Naive thymus-derived CD4-positive, alpha-beta T cell (primary cell): ENCODE measurements at regions of chr20 and their contacts with region 1.

Region 1: GRCh38 chr20:58407966-58408557 is 19.0 kb downstream of the VAPB start:
- DNase-seq: peak in 7 of 9 donors; percentile 19 to 47 (median 37)
- ATAC-seq: peak; percentile 77
- H3K4me3 ChIP-seq: peak overlapping the region; percentile 25
- H3K4me3 Mint-ChIP-seq: peak overlapping the region; percentile 62 to 84 (median 73)
- H3K27ac ChIP-seq: peak overlapping the region; percentile 60
- H3K27ac Mint-ChIP-seq: peak overlapping the region in 8 of 9 donors; percentile 79 to 93 (median 89)
- H3K4me1 ChIP-seq: peaks cover 21 to 35% of the 10 kb centered on the region in 2 donors
- H3K4me1 Mint-ChIP-seq: peaks cover 13 to 44% (median 39%) of the 10 kb centered on the region in 7 donors
- H3K27me3 ChIP-seq: no peaks in the 10 kb centered on the region
- H3K27me3 Mint-ChIP-seq: no peaks in the 10 kb centered on the region

Region 2: GRCh38 chr20:58433764-58434163 is 25.7 kb after region 1 on chr20:
- CTCF ChIA-PET with region 1: no interaction called
- POLR2A ChIA-PET with region 1: no interaction called
- intact Hi-C with region 1: loop called in 1 of 2 experiments (anchors 2 kb)
- DNase-seq: no peak
- ATAC-seq: no peak
- H3K4me3 ChIP-seq: no peak overlapping the region
- H3K4me3 Mint-ChIP-seq: no peak overlapping the region
- H3K27ac ChIP-seq: no peak overlapping the region
- H3K27ac Mint-ChIP-seq: peak overlapping the region in 5 of 9 donors; percentile 13 to 81 (median 53)
- H3K4me1 ChIP-seq: peaks cover 0 to 5% of the 10 kb centered on the region in 2 donors
- H3K4me1 Mint-ChIP-seq: peaks cover 28 to 59% (median 50%) of the 10 kb centered on the region in 7 donors
- H3K27me3 ChIP-seq: no peaks in the 10 kb centered on the region
- H3K27me3 Mint-ChIP-seq: no peaks in the 10 kb centered on the region

Region 3: DNA sequence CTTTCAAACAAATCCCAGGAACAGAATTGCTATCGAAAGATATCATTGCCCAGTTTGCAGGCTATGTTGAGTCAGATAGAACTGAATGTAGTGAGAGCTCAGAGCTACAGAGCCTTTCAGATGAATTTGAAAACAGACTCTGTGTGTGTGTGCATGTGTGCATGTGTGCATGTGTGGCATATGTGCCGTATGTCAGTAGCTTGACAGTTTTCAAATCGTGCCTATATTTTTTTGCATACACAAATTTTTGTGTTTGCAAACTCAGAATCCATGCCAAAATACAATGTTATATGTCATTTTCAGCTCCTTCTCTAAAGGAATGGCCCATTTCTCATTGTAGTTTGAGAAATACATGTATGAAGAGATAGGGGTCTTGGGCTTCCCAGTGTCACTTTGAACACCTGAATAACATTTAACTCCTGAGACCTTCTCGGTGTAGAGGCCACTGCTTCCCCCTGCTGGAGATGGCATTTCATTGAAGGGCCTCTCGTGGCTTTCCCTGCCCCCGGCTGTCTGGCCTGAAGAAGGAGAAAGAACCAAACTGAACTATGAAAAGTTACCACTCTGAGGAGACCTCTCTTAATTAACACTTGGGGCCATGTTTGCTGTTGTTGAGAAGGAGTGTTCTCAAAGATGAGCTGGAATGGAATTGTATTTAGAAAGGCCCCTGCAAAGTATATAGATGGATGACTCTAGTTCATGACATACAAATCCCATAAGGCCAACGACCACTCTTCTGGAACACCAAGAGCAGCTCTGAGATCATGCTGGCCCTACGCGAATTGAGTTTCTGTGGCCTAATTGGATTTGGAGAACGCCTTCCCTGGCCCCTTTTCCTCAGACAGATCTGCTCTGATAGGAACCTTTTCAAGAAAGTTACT is 39.7 kb after region 1 on chr20:
- CTCF ChIA-PET with region 1: no interaction called
- POLR2A ChIA-PET with region 1: no interaction called
- intact Hi-C with region 1: loop called in 1 of 2 experiments (anchors 5 kb)
- DNase-seq: peak in 8 of 9 donors; percentile 19 to 63 (median 51)
- ATAC-seq: peak; percentile 67
- H3K4me3 ChIP-seq: no peak overlapping the region
- H3K4me3 Mint-ChIP-seq: no peak overlapping the region
- H3K27ac ChIP-seq: no peak overlapping the region
- H3K27ac Mint-ChIP-seq: peak overlapping the region in 4 of 9 donors; percentile 36 to 69 (median 52)
- H3K4me1 ChIP-seq: no peaks in the 10 kb centered on the region
- H3K4me1 Mint-ChIP-seq: peaks cover 0 to 12% (median under 1%) of the 10 kb centered on the region in 7 donors
- H3K27me3 ChIP-seq: no peaks in the 10 kb centered on the region
- H3K27me3 Mint-ChIP-seq: no peaks in the 10 kb centered on the region